ENCODE measurements at regions of chr20 and their contacts with region 1.

Region 1: GRCh38 chr20:57698117-57698866 is 11.5 kb downstream of the PMEPA1 start:
- DNase-seq: peak; percentile 89
- ATAC-seq: peak; percentile 99
- H3K4me3 Mint-ChIP-seq: peak overlapping the region; percentile 33
- H3K27ac Mint-ChIP-seq: peak overlapping the region; percentile 77
- H3K4me1 Mint-ChIP-seq: peaks cover 40% of the 10 kb centered on the region
- H3K27me3 Mint-ChIP-seq: no peaks in the 10 kb centered on the region

Region 2: DNA sequence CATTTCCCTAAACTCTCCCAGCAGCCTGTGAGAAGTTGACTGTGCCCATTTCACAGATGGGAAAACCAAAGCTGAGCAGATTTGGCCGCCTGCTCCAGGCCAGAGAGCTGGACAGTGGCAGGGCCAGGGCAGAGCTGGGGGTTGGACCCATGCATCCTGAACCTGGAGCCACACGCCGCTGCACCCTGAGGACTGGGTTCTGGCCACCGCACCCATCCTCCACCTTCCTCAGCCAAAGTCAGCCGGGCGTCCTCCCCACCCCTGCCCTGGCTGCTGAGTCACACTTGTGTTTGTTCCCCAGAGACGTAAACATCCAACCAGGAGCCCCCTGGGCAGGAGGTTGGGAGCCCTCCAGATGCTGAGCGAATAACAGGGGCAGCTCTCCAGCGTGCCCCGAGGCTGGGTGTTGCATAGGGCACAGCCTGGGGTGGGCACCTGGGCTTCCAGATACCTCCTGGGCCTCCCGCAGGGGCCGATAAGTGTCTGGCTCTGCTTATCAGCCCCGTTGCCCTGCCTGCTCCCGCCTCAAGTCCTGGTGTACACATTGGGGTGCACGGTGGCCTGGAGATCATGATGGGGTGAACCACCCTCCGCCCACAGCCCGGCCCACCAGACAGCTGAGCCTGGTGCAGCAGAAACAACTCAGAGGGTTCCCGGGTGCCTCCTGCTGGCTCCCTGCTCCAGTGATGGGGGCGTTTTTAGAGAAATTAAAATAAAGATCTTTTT is 283.3 kb before region 1 on chr20:
- CTCF ChIA-PET with region 1: no interaction called
- POLR2A ChIA-PET with region 1: no interaction called
- intact Hi-C with region 1: no loop called
- DNase-seq: no peak
- ATAC-seq: no peak
- H3K4me3 Mint-ChIP-seq: no peak overlapping the region
- H3K27ac Mint-ChIP-seq: no peak overlapping the region
- H3K4me1 Mint-ChIP-seq: peaks cover 3% of the 10 kb centered on the region
- H3K27me3 Mint-ChIP-seq: no peaks in the 10 kb centered on the region

Region 3: DNA sequence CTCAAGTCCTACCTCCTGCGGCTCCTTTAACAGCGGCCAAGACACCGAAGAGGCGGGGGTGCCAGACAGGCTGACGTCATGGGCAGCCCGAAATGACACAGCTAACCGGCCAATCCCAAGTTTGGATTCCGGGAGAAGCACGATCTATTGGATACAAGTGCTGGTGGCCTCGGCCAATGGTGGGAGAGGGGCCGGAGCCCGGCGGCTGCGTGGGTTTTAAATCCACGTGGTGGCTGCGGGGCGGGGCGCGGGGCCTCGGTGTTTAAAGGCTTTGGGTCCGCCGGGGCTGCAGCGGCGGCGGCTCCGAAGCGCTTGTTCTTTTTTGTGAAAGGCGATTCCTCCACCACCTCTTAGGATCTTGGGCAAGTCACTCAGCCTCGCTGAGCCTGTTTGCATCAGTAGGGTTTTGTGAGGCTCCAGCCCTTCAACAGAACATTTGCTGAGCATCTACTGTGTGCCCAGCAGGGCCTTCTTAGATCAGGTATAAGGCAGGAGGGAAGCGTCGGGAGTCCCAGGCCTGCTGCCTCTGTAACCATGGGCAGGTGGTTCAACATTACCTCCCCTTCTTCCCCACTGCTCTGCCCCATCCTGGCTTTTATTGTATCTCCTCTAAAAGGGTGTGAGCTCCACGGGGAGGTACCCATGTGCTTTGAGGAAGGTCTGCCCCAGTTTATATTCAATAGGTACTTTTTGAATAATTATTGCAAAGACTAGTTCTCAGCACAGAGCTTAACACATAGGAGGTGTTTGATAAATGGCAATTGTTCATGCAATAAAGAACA is 20.4 kb after region 1 on chr20:
- CTCF ChIA-PET with region 1: interaction called, 3 read pairs
- POLR2A ChIA-PET with region 1: no interaction called
- intact Hi-C with region 1: loop called (anchors 1 kb)
- DNase-seq: peak; percentile 95
- ATAC-seq: peak; percentile 100
- H3K4me3 Mint-ChIP-seq: peak overlapping the region; percentile 37
- H3K27ac Mint-ChIP-seq: no peak overlapping the region
- H3K4me1 Mint-ChIP-seq: peaks cover 5% of the 10 kb centered on the region
- H3K27me3 Mint-ChIP-seq: no peaks in the 10 kb centered on the region

Region 4: DNA sequence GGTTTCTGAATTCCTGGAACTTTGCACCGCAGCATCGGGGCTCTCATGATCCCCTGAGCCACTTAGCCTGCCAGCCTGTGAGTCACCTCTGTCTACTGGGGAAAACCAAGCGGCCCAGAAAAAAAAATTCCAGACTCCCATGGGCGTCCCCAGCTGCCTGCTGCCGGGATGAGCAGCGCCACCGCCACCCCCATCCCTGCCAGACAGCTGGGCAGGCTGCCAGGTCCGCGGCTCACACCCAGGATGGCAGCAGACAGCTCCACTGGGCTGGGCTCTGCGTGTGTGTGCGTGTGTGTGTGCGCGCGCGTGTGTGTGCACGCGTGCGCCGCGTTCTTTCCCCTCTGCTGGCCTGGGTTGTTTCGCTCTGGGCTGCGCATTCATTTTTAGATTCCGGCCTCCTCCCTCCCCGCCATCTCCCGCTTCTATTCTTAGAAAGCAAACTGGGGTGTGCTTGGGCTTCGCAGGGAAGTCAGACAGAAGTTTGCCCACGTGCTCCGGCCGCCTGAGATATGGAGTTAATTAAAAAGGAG is 50.4 kb after region 1 on chr20:
- CTCF ChIA-PET with region 1: no interaction called
- POLR2A ChIA-PET with region 1: no interaction called
- intact Hi-C with region 1: loop called in 1 of 2 experiments (anchors 2 kb)
- DNase-seq: peak; percentile 77
- ATAC-seq: peak; percentile 94
- H3K4me3 Mint-ChIP-seq: peak overlapping the region; percentile 48
- H3K27ac Mint-ChIP-seq: peak overlapping the region; percentile 31
- H3K4me1 Mint-ChIP-seq: peaks cover 15% of the 10 kb centered on the region
- H3K27me3 Mint-ChIP-seq: peaks cover 25% of the 10 kb centered on the region

Region 5: DNA sequence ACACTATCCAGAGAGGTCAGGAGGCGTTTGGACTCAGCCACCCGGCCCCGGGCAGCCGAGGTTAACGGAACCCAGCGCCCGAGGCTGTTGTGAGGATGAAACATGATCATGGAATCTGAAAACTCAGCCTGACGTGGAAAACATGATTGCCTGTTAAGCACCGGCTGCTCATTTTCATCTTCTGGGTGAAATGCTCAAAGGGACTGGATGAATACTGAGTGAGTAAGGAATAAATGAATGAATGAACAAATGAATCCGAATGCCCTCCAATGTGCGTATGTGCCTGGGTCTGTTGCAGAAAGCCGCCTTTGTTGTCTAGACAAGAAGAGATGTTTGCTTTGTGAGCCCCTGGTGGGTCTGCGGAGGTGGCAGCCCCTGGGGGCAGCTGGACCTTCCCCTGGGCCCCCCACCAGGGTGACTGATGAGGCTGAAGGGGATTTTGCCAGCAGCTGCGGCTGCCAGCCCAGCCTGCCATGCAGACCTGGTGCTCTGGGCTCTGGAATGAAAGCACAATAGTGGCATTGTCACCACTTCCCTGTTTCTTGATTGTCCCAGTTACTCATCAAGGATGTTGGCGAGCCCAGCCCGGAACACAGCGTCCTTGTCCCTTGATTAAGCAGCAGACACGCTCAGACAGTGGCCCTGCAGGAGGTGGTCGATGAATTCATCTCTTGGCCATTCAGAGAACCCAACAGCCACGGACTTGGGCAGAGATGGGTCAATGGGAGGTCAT is 319.1 kb after region 1 on chr20:
- CTCF ChIA-PET with region 1: no interaction called
- POLR2A ChIA-PET with region 1: no interaction called
- intact Hi-C with region 1: loop called in 1 of 2 experiments (anchors 10 kb)
- DNase-seq: no peak
- ATAC-seq: no peak
- H3K4me3 Mint-ChIP-seq: no peak overlapping the region
- H3K27ac Mint-ChIP-seq: no peak overlapping the region
- H3K4me1 Mint-ChIP-seq: peaks cover 16% of the 10 kb centered on the region
- H3K27me3 Mint-ChIP-seq: peaks cover 16% of the 10 kb centered on the region

Region 6: GRCh38 chr20:58224974-58225373 is 526.7 kb after region 1 on chr20:
- CTCF ChIA-PET with region 1: no interaction called
- POLR2A ChIA-PET with region 1: no interaction called
- intact Hi-C with region 1: loop called in 1 of 2 experiments (anchors 5 kb)
- DNase-seq: no peak
- ATAC-seq: no peak
- H3K4me3 Mint-ChIP-seq: no peak overlapping the region
- H3K27ac Mint-ChIP-seq: no peak overlapping the region
- H3K4me1 Mint-ChIP-seq: peaks cover 31% of the 10 kb centered on the region
- H3K27me3 Mint-ChIP-seq: peaks cover 53% of the 10 kb centered on the region